Cardiac septum (tissue), 1 donor: ENCODE measurements at regions of chr3 and their contacts with region 1.

Region 1: DNA sequence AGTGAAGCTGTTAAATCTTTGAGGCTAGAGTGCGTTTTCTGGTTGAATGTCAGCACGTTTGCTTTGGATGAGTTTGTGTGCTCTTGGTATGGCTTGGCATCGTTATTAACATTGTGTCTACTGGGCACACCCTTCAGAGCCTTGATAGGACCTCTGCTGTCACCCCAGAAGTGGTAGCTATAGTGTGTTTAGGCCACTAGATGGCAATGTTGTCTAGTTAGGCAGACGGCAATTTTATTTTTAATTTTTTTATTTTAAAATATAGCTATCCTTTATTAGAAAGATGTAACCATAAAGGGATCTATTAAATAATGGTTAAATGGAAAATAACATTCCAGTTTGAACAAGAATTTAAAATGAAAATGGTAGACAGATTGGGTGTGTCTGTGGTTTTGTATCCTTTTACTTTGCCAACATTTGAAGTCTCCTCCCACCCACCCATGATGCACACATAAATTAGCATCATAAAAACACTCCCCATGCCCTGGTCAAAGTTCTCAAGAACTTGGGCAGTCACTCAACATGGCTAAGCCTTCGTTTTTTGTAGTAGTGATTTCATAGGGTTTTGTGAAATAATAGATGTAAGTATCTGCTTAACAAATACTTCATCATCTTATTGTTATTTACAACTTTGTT is 200.7 kb downstream of the KCNH8 start:
- DNase-seq: no peak

Region 2: DNA sequence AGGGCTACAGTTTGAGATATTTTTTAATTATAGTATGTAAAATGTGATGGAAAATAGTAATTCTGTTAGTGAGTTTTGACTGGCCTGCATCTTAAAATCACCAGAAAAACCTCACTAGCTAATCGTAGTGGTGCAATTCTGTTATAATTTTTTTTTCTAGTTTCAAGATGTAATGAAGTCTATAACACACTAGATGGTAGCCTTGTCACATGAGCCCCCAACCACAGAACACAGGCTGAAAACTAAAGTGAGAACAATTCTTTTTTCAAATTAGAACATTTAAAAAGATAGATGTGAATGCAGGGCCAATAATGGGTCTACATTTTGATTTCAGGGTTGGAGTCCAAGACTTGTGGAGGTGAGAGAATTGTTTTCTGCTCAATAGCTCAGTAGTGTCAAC is 284.0 kb before region 1 on chr3:
- intact Hi-C with region 1: no loop called
- DNase-seq: no peak

Region 3: GRCh38 chr3:19543212-19543841 is 194.3 kb after region 1 on chr3:
- intact Hi-C with region 1: loop called (anchors 2 kb)
- DNase-seq: no peak

Region 4: DNA sequence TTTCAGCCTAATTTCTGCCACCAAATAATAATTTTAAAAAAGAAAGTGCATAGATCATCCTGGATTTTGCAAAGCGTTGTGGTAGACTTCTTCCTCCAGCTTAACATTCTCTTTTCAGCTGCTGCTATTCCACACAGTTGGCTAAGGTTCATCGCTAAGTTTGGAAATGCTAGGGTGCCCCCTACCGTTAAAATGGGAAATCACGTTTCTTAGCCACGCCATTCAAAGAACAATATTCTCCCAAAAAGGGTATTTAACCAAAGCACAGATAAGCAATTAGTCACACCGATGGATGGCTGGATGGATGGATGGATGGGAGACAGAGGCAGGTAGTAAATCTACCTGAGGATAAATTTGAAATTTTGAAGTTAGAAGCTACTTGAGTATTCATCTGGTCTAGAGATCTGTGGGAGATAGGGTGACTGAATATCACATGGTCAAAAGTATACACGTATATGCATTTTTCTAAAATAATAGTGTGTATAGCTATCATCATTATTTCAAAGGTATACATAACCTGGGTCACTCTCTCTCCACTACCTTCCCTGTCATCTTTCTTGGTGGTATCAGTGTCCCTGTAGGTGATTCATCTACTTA is 517.8 kb after region 1 on chr3:
- intact Hi-C with region 1: loop called (anchors 5 kb)
- DNase-seq: no peak